ENCODE measurements at regions of chr7 and their contacts with region 1.

Region 1: DNA sequence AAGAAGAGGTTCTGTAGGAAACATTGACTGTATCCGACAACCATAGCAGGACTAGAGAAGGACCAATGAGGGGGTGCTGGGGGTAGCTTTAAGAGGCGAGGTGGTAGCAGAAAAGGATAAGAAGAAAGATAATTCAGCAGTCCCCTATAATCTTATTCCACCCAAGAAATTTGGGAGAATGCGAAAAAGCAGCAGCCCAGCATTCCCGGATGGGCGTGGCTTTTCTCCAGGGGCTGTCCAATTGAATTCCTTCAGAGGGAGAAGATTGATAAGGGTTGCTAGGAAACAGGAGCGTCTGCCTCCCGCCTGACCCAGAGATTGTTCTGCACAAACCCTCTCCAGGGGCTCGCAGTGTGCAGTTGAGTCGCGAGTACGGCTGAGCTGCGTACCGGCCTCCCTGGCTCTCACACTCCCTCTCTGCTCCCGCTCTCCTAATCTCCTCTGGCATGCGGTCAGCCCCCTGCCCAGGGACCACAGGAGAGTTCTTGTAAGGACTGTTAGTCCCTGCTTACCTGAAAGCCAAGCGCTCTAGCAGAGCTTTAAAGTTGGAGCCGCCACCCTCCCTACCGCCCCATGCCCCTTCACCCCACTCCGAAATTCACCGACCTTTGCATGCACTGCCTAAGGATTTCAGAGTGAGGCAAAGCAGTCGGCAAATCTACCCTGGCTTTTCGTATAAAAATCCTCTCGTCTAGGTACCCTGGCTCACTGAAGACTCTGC is at the start of gene GRM3:
- DNase-seq: no peak
- H3K4me3 ChIP-seq: no peak within 1 kb of the TSS
- H3K27ac ChIP-seq: no peak within 1 kb of the TSS
- H3K4me1 ChIP-seq: no peaks in the 10 kb centered on the region
- CTCF ChIP-seq: no peak
- total RNA-seq, gene GRM3: not detected in 2 replicates

Region 2: GRCh38 chr7:86692755-86693154 is 49.0 kb after region 1 on chr7:
- CTCF ChIA-PET with region 1: no interaction called
- POLR2A ChIA-PET with region 1: no interaction called
- intact Hi-C with region 1: loop called (anchors 10 kb)
- DNase-seq: no peak
- H3K4me3 ChIP-seq: no peak overlapping the region
- H3K27ac ChIP-seq: no peak overlapping the region
- H3K4me1 ChIP-seq: no peaks in the 10 kb centered on the region
- CTCF ChIP-seq: no peak

Measured in OCI-LY7 (cell line).